BJ (cell line): ENCODE measurements at regions of chr18 and their contacts with region 1.

Region 1: DNA sequence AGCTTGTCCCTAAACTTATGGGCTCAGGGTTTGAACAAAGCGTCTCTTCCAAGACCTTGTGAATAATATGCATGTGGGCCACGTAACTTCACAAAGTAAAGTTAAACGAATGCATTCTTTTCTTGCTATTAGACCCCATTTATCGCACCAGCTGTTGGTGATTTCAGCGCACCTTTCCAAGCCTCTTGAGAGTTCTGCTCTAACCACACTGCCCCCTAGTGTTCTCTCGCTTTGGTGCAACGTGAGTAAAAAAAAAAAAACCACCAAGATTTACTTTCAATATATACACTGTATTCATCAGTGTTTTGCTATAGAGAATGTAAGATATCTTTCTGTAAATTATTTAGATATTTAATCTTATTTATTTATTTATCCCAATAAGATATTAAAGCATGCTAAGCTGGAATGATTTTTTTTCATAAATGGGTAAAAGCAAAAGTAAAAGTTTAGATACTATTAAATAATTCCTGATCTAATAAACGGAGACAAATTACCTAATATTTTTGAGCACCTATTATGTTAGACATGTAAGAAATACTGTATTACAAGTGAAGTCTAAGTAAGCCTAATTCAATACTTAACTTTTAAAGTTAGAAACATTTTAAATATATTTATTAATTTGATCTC is 459.5 kb downstream of the DLGAP1 start:
- DNase-seq: no peak
- H3K4me3 ChIP-seq: no peak overlapping the region
- H3K27me3 ChIP-seq: no peaks in the 10 kb centered on the region
- CTCF ChIP-seq: peak; percentile 89

Region 2: GRCh38 chr18:3842844-3843243 is 152.7 kb before region 1 on chr18:
- CTCF ChIA-PET with region 1: interaction called, 10 read pairs
- POLR2A ChIA-PET with region 1: no interaction called
- DNase-seq: no peak
- H3K4me3 ChIP-seq: no peak overlapping the region
- H3K27me3 ChIP-seq: no peaks in the 10 kb centered on the region; the same call in 1 of the 2 replicates
- CTCF ChIP-seq: no peak

Region 3: GRCh38 chr18:3869848-3870247 is 125.7 kb before region 1 on chr18:
- CTCF ChIA-PET with region 1: interaction called, 35 read pairs
- POLR2A ChIA-PET with region 1: no interaction called
- DNase-seq: peak; percentile 12
- H3K4me3 ChIP-seq: no peak overlapping the region
- H3K27me3 ChIP-seq: no peaks in the 10 kb centered on the region
- CTCF ChIP-seq: peak; percentile 47

Region 4: DNA sequence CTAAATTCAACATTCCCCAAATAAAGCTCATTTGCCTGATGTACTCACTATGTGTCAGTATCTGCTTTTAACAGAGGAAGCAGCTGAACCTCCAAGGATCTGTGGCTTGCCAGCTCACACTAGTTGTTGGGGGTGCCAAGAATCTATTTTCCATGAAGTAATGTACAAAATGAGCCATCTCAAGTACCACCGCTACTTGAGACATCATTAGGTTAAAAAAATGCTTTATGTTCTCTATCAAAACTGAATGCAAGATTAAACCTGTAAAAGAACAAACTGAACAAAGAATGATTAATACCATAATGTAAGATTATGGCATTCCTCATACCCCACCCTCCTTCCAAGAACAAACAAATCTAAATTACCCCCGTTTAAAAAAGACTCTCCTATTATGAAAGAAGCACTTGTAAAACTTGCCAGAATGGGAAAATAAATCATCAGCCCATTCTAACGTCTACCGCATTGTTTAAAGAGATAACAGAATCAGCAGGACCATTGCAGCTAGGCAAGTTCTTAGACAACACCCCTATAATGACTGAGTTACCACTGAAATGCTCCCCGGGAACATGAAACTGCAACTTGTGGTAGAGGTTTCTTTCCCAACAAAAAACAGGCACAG is 12.1 kb before region 1 on chr18:
- CTCF ChIA-PET with region 1: interaction called, 32 read pairs
- POLR2A ChIA-PET with region 1: interaction called, 3 read pairs
- DNase-seq: peak; percentile 45
- H3K4me3 ChIP-seq: no peak overlapping the region
- H3K27me3 ChIP-seq: no peaks in the 10 kb centered on the region
- CTCF ChIP-seq: no peak